ENCODE measurements at regions of chrX and their contacts with region 1.

Region 1: DNA sequence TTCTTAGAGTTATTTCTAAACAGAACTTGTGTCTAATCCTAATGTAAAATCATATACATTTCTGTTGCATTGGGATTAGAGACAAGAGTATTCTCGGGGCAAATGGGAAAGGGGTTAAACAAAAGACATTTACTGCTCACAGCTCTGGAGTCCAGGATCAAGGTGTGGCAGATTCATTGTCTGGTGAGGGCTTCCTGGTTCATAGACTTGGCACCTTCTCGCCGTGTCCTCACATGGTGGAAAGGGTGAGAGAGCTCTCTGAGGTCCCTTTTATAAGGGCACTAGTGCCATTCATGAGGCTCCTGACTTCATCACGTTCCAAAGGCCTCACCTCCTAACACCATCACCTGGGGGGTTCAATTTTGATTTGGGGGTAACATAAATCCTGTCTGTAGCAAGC is 90.3 kb upstream of the PRKX start:
- DNase-seq: peak; percentile 18
- H3K4me3 ChIP-seq: no peak overlapping the region
- H3K27ac ChIP-seq: no peak overlapping the region
- H3K4me1 ChIP-seq: no peaks in the 10 kb centered on the region
- H3K27me3 ChIP-seq: peaks cover 9% of the 10 kb centered on the region
- CTCF ChIP-seq: no peak
- EP300 ChIP-seq: no peak
- POLR2A ChIP-seq: no peak

Region 2: GRCh38 chrX:2410279-2411020 is 1393.3 kb before region 1 on chrX:
- in situ Hi-C with region 1: no loop called
- intact Hi-C with region 1: no loop called
- DNase-seq: peak; percentile 54
- H3K4me3 ChIP-seq: no peak overlapping the region
- H3K27ac ChIP-seq: peak overlapping the region; percentile 44 to 62 (median 48)
- H3K4me1 ChIP-seq: peaks cover 0 to 13% (median 9%) of the 10 kb centered on the region in 4 donors
- H3K27me3 ChIP-seq: no peaks in the 10 kb centered on the region
- CTCF ChIP-seq: no peak
- EP300 ChIP-seq: no peak
- POLR2A ChIP-seq: no peak

Region 3: DNA sequence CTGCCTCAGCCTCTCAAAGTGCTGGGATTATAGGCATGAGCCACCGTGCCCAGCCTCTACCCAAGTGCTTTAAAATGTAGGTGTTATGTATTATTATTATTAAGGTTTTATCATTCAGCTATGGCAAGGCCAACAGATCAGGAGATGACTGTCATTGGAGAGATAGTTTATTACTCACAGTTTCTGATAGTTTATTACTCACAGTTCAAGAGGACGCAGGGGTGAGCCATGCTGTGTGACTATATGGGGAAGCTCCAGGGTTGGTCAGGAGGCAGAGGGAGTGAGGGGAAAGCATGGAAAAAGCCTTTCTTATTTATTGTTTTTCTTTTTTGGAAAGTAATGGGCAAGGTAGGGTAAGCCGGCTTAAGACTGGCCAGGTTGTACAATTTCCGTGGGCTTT is 849.2 kb before region 1 on chrX:
- in situ Hi-C with region 1: no loop called
- intact Hi-C with region 1: loop called (anchors 5 kb)
- DNase-seq: no peak
- H3K4me3 ChIP-seq: no peak overlapping the region
- H3K27ac ChIP-seq: no peak overlapping the region
- H3K4me1 ChIP-seq: no peaks in the 10 kb centered on the region
- H3K27me3 ChIP-seq: no peaks in the 10 kb centered on the region
- CTCF ChIP-seq: no peak
- EP300 ChIP-seq: no peak
- POLR2A ChIP-seq: no peak

Region 4: GRCh38 chrX:3449287-3449686 is 354.4 kb before region 1 on chrX:
- in situ Hi-C with region 1: no loop called
- intact Hi-C with region 1: no loop called
- DNase-seq: no peak
- H3K4me3 ChIP-seq: no peak overlapping the region
- H3K27ac ChIP-seq: no peak overlapping the region
- H3K4me1 ChIP-seq: no peaks in the 10 kb centered on the region
- H3K27me3 ChIP-seq: no peaks in the 10 kb centered on the region
- CTCF ChIP-seq: no peak
- EP300 ChIP-seq: no peak
- POLR2A ChIP-seq: no peak

Region 5: DNA sequence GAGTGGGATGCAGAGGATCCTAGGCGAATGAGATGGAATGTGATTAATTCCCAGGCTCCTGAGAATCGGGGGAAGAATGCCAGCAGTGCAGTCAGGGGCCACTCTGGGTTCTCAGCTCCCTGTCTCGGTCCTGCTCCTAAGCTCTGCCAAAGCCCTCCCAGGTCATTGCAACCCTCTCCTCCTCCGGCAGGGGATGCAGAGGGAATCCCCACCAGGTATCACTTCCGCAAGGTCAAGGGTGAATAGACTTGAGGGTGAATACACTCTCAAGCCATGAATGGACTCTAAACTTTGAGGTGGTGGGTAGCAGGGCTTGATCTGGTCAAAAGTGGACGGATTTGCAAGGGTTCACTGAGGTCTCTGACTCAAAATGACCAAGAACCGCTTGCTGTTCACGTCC is 318.0 kb before region 1 on chrX:
- in situ Hi-C with region 1: no loop called
- intact Hi-C with region 1: no loop called
- DNase-seq: no peak
- H3K4me3 ChIP-seq: no peak overlapping the region
- H3K27ac ChIP-seq: no peak overlapping the region
- H3K4me1 ChIP-seq: no peaks in the 10 kb centered on the region
- H3K27me3 ChIP-seq: no peaks in the 10 kb centered on the region
- CTCF ChIP-seq: no peak
- EP300 ChIP-seq: no peak
- POLR2A ChIP-seq: no peak